A673 (cell line): ENCODE measurements at regions of chr4 and their contacts with region 1.

Region 1: DNA sequence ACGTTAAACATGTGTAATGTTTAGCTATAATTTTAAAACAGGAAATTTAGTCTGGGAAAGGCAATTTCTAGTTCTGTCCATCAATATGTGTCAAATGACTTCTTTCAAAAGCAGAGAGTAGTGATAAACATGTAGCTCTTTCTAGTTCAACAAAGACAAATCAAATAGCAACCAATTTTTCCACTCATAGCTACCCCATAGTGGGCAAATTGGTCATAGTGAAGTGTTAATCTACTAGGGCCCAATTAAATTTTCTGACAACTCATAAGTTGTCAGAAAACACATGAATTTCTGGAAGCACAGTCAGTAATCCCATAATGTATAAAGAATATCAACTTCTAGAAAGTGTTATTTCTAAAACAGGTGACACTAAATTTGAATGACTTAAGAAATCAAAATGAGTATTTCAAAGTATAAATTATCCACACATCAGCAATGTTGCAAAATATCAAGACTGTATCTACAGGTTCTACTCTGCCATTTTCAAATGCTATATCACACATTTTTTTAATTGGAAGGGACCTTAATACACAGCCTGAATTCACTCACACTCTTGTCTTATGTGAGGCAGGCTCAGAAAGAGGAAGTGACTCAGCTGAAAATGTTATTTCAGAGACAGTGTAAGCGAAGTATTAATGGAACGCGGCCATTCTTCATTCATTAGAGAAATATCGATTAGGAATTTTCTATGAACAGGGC is 7.7 kb downstream of the OCIAD2 start:
- DNase-seq: peak; percentile 69
- H3K4me3 ChIP-seq: no peak overlapping the region
- H3K27ac ChIP-seq: peak overlapping the region; percentile 79
- H3K4me1 ChIP-seq: peaks cover 43% of the 10 kb centered on the region
- H3K27me3 ChIP-seq: no peaks in the 10 kb centered on the region
- CTCF ChIP-seq: no peak

Region 2: GRCh38 chr4:48588230-48589097 is 310.4 kb before region 1 on chr4:
- CTCF ChIA-PET with region 1: no interaction called
- POLR2A ChIA-PET with region 1: no interaction called
- intact Hi-C with region 1: loop called (anchors 10 kb)
- DNase-seq: no peak
- H3K4me3 ChIP-seq: no peak overlapping the region
- H3K27ac ChIP-seq: no peak overlapping the region
- H3K4me1 ChIP-seq: peaks cover 1% of the 10 kb centered on the region
- H3K27me3 ChIP-seq: no peaks in the 10 kb centered on the region
- CTCF ChIP-seq: no peak